Heart left ventricle (tissue), 16 donors: ENCODE measurements at regions of chr5 and their contacts with region 1.

Region 1: GRCh38 chr5:173498286-173498685 is 118.2 kb downstream of the BOD1 start:
- DNase-seq: peak in 3 of 5 donors; percentile 29 to 40 (median 33)
- ATAC-seq: peak; percentile 34 to 72 (median 49)
- H3K4me3 ChIP-seq: no peak overlapping the region
- H3K27ac ChIP-seq: peak overlapping the region in 11 of 12 donors; percentile 42 to 85 (median 61)
- H3K4me1 ChIP-seq: peaks cover 0 to 42% (median 18%) of the 10 kb centered on the region in 12 donors
- H3K27me3 ChIP-seq: no peaks in the 10 kb centered on the region
- CTCF ChIP-seq: no peak
- POLR2A ChIP-seq: no peak

Region 2: DNA sequence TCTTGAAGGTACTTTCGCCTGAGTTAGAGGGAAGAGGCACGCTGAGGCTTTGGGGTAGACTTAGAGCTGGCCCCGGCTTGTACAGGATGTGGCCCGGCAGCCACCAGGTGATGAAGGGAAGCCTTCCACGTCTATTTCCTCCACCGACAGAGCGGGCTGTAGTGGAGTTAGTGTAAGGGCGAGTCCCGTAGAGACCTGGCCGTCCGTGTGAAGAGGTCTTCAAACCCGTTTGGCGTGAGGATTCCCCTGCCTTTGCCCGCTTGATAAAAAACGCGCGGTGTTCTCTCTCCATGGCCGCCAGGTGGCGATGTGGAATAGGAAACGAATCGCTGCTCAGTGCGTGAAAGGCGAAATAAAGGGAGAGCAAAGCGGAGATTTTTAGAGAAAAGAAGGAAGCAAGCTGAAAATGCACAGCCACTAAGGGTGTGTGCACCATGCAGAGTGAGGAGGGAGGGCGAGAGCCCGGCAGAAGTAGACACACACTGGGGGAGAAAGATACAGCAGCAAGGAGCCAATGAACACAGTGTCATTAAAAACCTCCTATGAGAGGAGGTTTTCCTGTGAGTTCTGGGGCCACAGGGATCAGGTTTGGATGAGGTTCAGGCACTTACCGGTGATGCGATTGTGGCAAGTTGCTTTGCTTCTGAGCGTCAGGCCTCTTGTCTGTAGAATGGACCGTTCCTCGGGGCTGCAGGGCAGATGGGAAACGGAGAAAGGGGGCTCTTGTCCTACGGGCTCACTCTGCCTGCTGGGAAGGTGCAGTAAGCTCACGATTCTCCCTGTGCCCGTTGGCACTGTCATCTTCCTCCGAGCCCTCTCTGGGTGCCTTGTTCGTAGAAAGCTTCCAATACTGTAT is 204.2 kb before region 1 on chr5:
- intact Hi-C with region 1: loop called in 1 of 10 experiments (anchors 5 kb)
- DNase-seq: peak; percentile 60 to 86 (median 72)
- ATAC-seq: peak; percentile 11 to 65 (median 46)
- H3K4me3 ChIP-seq: peak overlapping the region in 5 of 12 donors; percentile 5 to 32 (median 11)
- H3K27ac ChIP-seq: no peak overlapping the region
- H3K4me1 ChIP-seq: peaks cover 0 to 21% (median 8%) of the 10 kb centered on the region in 12 donors
- H3K27me3 ChIP-seq: peaks cover 0 to 28% (median 0%) of the 10 kb centered on the region in 9 donors
- CTCF ChIP-seq: peak; percentile 77 to 96 (median 86)
- POLR2A ChIP-seq: no peak

Region 3: GRCh38 chr5:173396311-173396993 is 101.8 kb before region 1 on chr5:
- intact Hi-C with region 1: loop called in 1 of 10 experiments (anchors 10 kb)
- DNase-seq: no peak
- ATAC-seq: peak in 2 of 4 donors; percentile 25 to 49
- H3K4me3 ChIP-seq: no peak overlapping the region
- H3K27ac ChIP-seq: peak overlapping the region in 2 of 12 donors; percentile 33 to 57
- H3K4me1 ChIP-seq: peaks cover 0 to 9% (median 0%) of the 10 kb centered on the region in 12 donors
- H3K27me3 ChIP-seq: no peaks in the 10 kb centered on the region
- CTCF ChIP-seq: peak in 2 of 12 donors; percentile 5 to 16
- POLR2A ChIP-seq: no peak

Region 4: GRCh38 chr5:173423452-173424117 is 74.7 kb before region 1 on chr5:
- intact Hi-C with region 1: loop called in 1 of 10 experiments (anchors 2 kb)
- DNase-seq: peak in 1 of 5 donors; percentile 37
- ATAC-seq: peak; percentile 48 to 75 (median 72)
- H3K4me3 ChIP-seq: no peak overlapping the region
- H3K27ac ChIP-seq: peak overlapping the region in 2 of 12 donors; percentile 22 to 61
- H3K4me1 ChIP-seq: no peaks in the 10 kb centered on the region
- H3K27me3 ChIP-seq: no peaks in the 10 kb centered on the region
- CTCF ChIP-seq: no peak
- POLR2A ChIP-seq: no peak

Region 5: DNA sequence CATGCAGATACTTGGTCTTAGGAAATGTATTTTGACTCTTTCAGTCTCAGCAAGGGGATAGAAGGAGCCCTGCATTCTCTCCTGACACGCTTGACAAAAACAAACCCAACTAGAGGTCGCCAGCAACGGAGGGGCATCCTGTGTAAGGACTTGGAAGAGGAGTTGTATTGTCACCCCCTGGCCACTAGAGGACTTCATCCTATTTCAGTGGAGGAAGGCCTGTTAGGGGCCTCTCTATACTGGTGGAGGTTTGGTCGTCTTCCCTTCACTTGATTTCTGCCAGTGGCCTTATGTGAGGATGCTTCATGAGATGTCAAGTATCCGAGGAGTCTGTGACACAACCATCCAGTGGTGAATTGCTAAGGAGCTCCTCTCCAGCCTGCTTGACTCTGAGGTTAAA is 47.3 kb before region 1 on chr5:
- intact Hi-C with region 1: loop called in 2 of 10 experiments (anchors 2 to 5 kb)
- DNase-seq: no peak
- ATAC-seq: no peak
- H3K4me3 ChIP-seq: no peak overlapping the region
- H3K27ac ChIP-seq: peak overlapping the region in 8 of 12 donors; percentile 34 to 79 (median 68)
- H3K4me1 ChIP-seq: peaks cover 0 to 36% (median 15%) of the 10 kb centered on the region in 12 donors
- H3K27me3 ChIP-seq: no peaks in the 10 kb centered on the region
- CTCF ChIP-seq: peak in 7 of 12 donors; percentile 13 to 45 (median 32)
- POLR2A ChIP-seq: no peak

Region 6: DNA sequence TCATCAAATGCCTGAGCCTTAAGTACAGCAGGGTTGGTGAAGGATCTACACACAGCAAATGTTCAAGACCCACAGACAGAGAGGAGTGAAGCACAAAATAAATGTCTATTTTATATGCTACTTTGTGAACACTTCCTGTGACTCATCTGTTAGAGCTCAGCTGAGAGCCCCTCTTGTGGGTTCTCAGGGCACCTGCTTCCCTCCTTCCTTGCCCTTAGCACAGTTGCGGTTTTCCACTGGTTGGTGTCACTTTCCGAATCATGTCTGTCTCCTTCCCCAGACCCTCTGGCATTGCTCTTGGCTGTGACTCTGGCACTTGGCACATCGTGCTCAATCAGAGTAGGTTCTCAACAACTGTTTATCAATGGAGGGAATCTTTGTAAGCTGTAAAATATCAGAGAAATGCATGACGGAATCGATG is 41.5 kb before region 1 on chr5:
- intact Hi-C with region 1: loop called in 2 of 10 experiments (anchors 2 to 5 kb)
- DNase-seq: no peak
- ATAC-seq: no peak
- H3K4me3 ChIP-seq: no peak overlapping the region
- H3K27ac ChIP-seq: peak overlapping the region in 11 of 12 donors; percentile 21 to 77 (median 60)
- H3K4me1 ChIP-seq: peaks cover 0 to 42% (median 21%) of the 10 kb centered on the region in 12 donors
- H3K27me3 ChIP-seq: no peaks in the 10 kb centered on the region
- CTCF ChIP-seq: no peak
- POLR2A ChIP-seq: no peak